CD4-positive, alpha-beta T cell (primary cell): ENCODE measurements at regions of chr11 and their contacts with region 1.

Region 1: DNA sequence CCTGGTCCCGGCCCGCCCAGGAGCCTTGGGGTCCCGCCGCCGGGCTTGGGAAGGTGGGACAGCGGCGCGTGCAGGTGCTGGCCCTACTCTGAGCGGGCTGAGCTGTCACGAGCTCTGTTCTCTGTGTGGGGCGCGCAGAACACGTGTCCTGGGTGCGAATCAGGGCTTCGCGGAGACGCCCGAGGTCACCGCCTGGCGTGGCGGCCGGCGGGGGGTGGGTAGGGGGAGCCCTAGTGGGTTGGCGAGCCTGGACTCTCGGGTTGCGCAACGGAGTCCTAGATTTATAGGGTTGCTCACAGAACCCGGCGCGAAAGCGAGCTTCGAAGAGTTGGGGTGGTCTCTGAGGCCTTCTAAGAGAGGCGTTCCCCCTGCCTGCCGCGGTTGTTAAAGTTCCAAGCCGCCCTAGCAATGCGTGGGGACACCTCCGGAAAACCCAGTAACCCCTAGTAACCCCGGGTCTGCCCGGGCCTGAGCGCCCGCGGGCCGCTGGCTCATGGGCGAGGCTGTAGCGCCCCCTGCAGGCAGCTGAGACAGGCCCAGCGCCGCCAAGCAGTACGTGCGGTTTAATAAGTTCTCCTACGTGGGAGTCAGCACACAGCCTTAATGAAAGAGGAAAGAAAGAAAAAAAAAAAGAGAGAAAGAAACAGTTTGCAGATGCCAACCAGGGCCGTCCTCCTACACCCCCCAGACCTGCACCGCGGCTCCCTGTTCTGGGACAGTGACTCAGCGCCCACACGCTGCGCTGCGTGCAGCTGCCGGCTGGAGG is 2.8 kb downstream of the ADM start:
- DNase-seq: peak; percentile 70 to 92 (median 80)
- ATAC-seq: peak; percentile 66
- H3K4me3 ChIP-seq: peak overlapping the region; percentile 63
- H3K4me3 Mint-ChIP-seq: peak overlapping the region; percentile 95
- H3K27ac ChIP-seq: no peak overlapping the region
- H3K27ac Mint-ChIP-seq: no peak overlapping the region
- H3K4me1 ChIP-seq: peaks cover 56% of the 10 kb centered on the region
- H3K4me1 Mint-ChIP-seq: peaks cover 40% of the 10 kb centered on the region
- H3K27me3 ChIP-seq: peaks cover 32 to 45% of the 10 kb centered on the region in 2 experiments
- H3K27me3 Mint-ChIP-seq: peaks cover 80% of the 10 kb centered on the region
- CTCF ChIP-seq: peak; percentile 98

Region 2: GRCh38 chr11:8688414-8689362 is 1618.9 kb before region 1 on chr11:
- CTCF ChIA-PET with region 1: no interaction called
- POLR2A ChIA-PET with region 1: no interaction called
- intact Hi-C with region 1: loop called in 1 of 2 experiments (anchors 10 kb)
- DNase-seq: peak; percentile 46 to 89 (median 77)
- ATAC-seq: peak; percentile 76
- H3K4me3 ChIP-seq: peak overlapping the region; percentile 73
- H3K4me3 Mint-ChIP-seq: peak overlapping the region; percentile 96
- H3K27ac ChIP-seq: peak overlapping the region; percentile 73 to 84
- H3K27ac Mint-ChIP-seq: peak overlapping the region; percentile 90
- H3K4me1 ChIP-seq: peaks cover 26% of the 10 kb centered on the region
- H3K4me1 Mint-ChIP-seq: peaks cover 43% of the 10 kb centered on the region
- H3K27me3 ChIP-seq: no peaks in the 10 kb centered on the region
- H3K27me3 Mint-ChIP-seq: no peaks in the 10 kb centered on the region
- CTCF ChIP-seq: no peak

Region 3: GRCh38 chr11:9534791-9535781 is 772.5 kb before region 1 on chr11:
- CTCF ChIA-PET with region 1: interaction called, 4 read pairs
- POLR2A ChIA-PET with region 1: no interaction called
- intact Hi-C with region 1: loop called in 1 of 2 experiments (anchors 5 kb)
- DNase-seq: peak; percentile 63 to 89 (median 72)
- ATAC-seq: peak; percentile 64
- H3K4me3 ChIP-seq: no peak overlapping the region
- H3K4me3 Mint-ChIP-seq: no peak overlapping the region
- H3K27ac ChIP-seq: no peak overlapping the region
- H3K27ac Mint-ChIP-seq: no peak overlapping the region
- H3K4me1 ChIP-seq: no peaks in the 10 kb centered on the region
- H3K4me1 Mint-ChIP-seq: no peaks in the 10 kb centered on the region
- H3K27me3 ChIP-seq: no peaks in the 10 kb centered on the region
- H3K27me3 Mint-ChIP-seq: no peaks in the 10 kb centered on the region
- CTCF ChIP-seq: peak; percentile 86

Region 4: GRCh38 chr11:9757809-9758636 is 549.6 kb before region 1 on chr11:
- CTCF ChIA-PET with region 1: interaction called, 9 read pairs
- POLR2A ChIA-PET with region 1: interaction called, 4 read pairs
- intact Hi-C with region 1: loop called (anchors 1 to 2 kb)
- DNase-seq: peak; percentile 83 to 97 (median 89)
- ATAC-seq: peak; percentile 81
- H3K4me3 ChIP-seq: peak overlapping the region; percentile 75
- H3K4me3 Mint-ChIP-seq: peak overlapping the region; percentile 88
- H3K27ac ChIP-seq: no peak overlapping the region
- H3K27ac Mint-ChIP-seq: peak overlapping the region; percentile 79
- H3K4me1 ChIP-seq: peaks cover 21% of the 10 kb centered on the region
- H3K4me1 Mint-ChIP-seq: peaks cover 17% of the 10 kb centered on the region
- H3K27me3 ChIP-seq: no peaks in the 10 kb centered on the region
- H3K27me3 Mint-ChIP-seq: no peaks in the 10 kb centered on the region
- CTCF ChIP-seq: peak; percentile 62

Region 5: GRCh38 chr11:9972989-9973388 is 334.6 kb before region 1 on chr11:
- CTCF ChIA-PET with region 1: no interaction called
- POLR2A ChIA-PET with region 1: no interaction called
- intact Hi-C with region 1: loop called in 1 of 2 experiments (anchors 5 kb)
- DNase-seq: peak in 6 of 14 experiments; percentile 2 to 51 (median 30)
- ATAC-seq: no peak
- H3K4me3 ChIP-seq: no peak overlapping the region
- H3K4me3 Mint-ChIP-seq: no peak overlapping the region
- H3K27ac ChIP-seq: no peak overlapping the region
- H3K27ac Mint-ChIP-seq: no peak overlapping the region
- H3K4me1 ChIP-seq: no peaks in the 10 kb centered on the region
- H3K4me1 Mint-ChIP-seq: no peaks in the 10 kb centered on the region
- H3K27me3 ChIP-seq: no peaks in the 10 kb centered on the region
- H3K27me3 Mint-ChIP-seq: no peaks in the 10 kb centered on the region
- CTCF ChIP-seq: peak; percentile 46

Region 6: DNA sequence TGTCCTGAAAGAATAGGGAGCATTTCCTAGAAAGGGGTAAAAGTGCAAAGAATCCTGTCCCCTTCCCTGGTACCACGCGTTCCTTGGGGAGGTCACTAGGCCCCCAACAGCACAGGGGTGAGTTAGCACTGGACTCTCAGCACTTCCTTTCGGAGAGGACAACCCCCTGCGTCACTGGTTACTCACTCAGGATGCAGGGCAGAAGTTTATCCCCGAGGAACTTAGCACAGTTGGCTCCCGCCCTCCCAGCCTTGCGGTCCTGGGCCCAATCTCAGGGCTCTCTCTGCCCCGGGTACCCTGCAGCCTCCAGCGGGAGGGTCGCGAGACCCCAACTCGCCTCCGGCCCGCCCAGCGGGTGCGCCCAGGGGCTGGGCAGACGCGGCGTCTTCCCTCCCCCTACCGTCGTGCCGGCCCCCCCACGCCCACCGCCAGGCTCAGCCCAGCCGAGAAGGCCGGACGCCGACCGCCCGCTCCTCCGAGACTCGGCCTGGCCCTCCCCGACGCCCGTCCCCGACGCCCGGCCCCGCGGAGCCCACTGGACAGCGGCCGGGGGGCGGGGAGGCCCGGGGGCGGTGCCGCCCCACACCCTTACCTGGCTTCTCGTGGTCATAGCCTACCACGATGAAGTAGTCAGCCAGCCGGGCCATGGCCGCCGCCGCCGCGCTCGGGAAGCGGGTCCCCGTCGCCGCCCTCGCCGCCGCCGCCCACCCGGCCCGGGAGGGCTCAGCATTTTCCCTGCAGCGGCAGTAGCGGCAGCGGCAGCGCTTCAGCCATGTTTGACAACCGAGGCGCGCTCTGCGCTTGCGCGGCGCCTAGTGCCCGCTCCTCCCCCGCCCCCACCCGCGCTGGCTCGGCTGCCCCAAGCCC is 14.0 kb before region 1 on chr11 and contains the start of gene SBF2:
- CTCF ChIA-PET with region 1: interaction called, 32 read pairs
- POLR2A ChIA-PET with region 1: interaction called, 13 read pairs
- intact Hi-C with region 1: no loop called
- DNase-seq: peak; percentile 60 to 91 (median 76)
- ATAC-seq: peak; percentile 70
- H3K4me3 ChIP-seq: peak within 1 kb of the TSS; percentile 65
- H3K4me3 Mint-ChIP-seq: peak within 1 kb of the TSS; percentile 89
- H3K27ac ChIP-seq: no peak within 1 kb of the TSS
- H3K27ac Mint-ChIP-seq: peak within 1 kb of the TSS; percentile 67
- H3K4me1 ChIP-seq: peaks cover 34% of the 10 kb centered on the region
- H3K4me1 Mint-ChIP-seq: peaks cover 37% of the 10 kb centered on the region
- H3K27me3 ChIP-seq: peaks cover 5 to 23% of the 10 kb centered on the region in 2 experiments
- H3K27me3 Mint-ChIP-seq: peaks cover 33% of the 10 kb centered on the region
- CTCF ChIP-seq: no peak
- total RNA-seq, gene SBF2: 14.2 to 15.2 TPM